HepG2 (cell line): ENCODE measurements at regions of chr2 and their contacts with region 1.

Region 1: DNA sequence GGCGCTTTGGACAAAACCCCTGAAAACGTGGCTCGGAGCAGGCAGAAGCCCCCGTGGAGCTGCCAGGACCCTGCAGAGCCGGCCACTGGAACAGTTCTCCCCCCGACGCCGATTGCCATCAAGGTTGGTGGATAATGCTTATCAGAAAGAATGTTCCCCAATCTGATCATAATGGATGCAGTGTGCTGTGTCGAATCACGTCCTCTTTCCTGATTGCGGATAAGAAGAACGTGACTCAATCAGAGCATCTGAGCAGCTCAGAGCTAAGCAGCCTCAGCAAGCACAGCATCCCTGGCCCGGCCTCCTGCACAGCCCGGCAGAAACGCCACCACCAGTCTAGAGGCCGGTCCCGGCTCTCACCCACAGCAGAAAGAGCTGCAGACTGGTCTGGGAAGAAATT is 488.0 kb downstream of the EIPR1 start:
- DNase-seq: no peak
- ATAC-seq: no peak
- H3K4me3 ChIP-seq: no peak overlapping the region
- H3K27ac ChIP-seq: no peak overlapping the region
- H3K4me1 ChIP-seq: no peaks in the 10 kb centered on the region
- H3K27me3 ChIP-seq: peaks cover 3 to 35% of the 10 kb centered on the region in 2 experiments; a peak in 3 of 5 replicates
- CTCF ChIP-seq: no peak
- EP300 ChIP-seq: no peak
- POLR2A ChIP-seq: no peak
- RAD21 ChIP-seq: no peak

Region 2: GRCh38 chr2:2747797-2748301 is 141.8 kb before region 1 on chr2:
- CTCF ChIA-PET with region 1: no interaction called
- POLR2A ChIA-PET with region 1: no interaction called
- in situ Hi-C with region 1: no loop called
- intact Hi-C with region 1: no loop called
- DNase-seq: no peak
- ATAC-seq: no peak
- H3K4me3 ChIP-seq: no peak overlapping the region
- H3K27ac ChIP-seq: no peak overlapping the region
- H3K4me1 ChIP-seq: no peaks in the 10 kb centered on the region
- H3K27me3 ChIP-seq: peaks cover 0 to 44% of the 10 kb centered on the region in 2 experiments; a peak in 3 of 5 replicates
- CTCF ChIP-seq: no peak
- EP300 ChIP-seq: no peak
- POLR2A ChIP-seq: no peak
- RAD21 ChIP-seq: no peak

Region 3: GRCh38 chr2:3233877-3234276 is 344.2 kb after region 1 on chr2:
- CTCF ChIA-PET with region 1: no interaction called
- POLR2A ChIA-PET with region 1: no interaction called
- in situ Hi-C with region 1: no loop called
- intact Hi-C with region 1: loop called (anchors 5 kb)
- DNase-seq: no peak
- ATAC-seq: peak; percentile 76
- H3K4me3 ChIP-seq: no peak overlapping the region
- H3K27ac ChIP-seq: no peak overlapping the region
- H3K4me1 ChIP-seq: 0 out of 2 replicates have a peak, but pooled peaks cover 8% of the 10 kb centered on the region
- H3K27me3 ChIP-seq: no peaks in the 10 kb centered on the region
- CTCF ChIP-seq: no peak
- EP300 ChIP-seq: no peak
- POLR2A ChIP-seq: no peak
- RAD21 ChIP-seq: no peak